ENCODE measurements at regions of chr10 and their contacts with region 1.

Region 1: DNA sequence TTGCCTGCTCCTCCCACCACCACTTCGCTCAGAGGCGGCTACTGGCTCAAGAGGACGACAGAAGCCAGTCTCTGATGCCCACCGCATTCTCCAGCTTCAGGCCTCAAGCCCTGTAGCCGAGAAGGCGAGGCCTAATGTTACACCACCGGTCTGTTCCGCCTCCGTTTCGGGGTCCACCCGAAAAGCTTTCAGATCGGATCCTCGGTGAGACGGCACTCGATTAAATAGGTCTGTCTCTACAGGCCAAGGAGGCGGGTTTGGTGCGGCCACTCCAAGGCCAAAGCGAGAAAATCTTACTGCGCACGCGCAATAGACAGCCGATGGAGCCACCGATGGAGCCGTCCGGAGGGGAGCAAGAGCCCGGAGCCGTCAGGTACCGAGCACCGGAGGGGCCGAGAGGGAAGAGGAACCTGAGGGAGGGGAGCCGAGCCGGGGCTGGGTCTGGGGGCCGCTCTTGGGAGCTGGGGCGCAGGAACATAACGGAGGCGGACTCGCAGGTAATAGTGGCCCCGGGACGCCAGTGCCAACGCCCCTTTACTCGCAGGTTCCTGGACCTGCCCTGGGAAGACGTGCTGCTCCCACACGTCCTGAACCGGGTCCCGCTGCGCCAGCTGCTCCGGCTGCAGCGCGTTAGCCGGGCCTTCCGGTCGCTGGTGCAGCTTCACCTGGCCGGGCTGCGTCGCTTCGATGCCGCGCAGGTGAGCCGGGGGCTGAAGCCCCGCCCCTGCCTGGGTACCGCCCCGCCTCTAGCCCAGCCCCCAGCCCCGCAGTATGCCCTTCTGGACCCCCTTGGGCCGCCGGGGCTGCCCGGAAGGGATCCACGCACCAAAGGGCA is at the start of gene FBXL15:
- DNase-seq: peak; percentile 82 to 96 (median 90)
- ATAC-seq: peak; percentile 86
- H3K4me3 ChIP-seq: peak within 1 kb of the TSS; percentile 93
- H3K4me3 Mint-ChIP-seq: peak within 1 kb of the TSS; percentile 94 to 99 (median 98)
- H3K27ac ChIP-seq: peak within 1 kb of the TSS; percentile 75
- H3K27ac Mint-ChIP-seq: peak within 1 kb of the TSS; percentile 91 to 97 (median 95)
- H3K4me1 ChIP-seq: peaks cover 26 to 33% of the 10 kb centered on the region in 2 donors
- H3K4me1 Mint-ChIP-seq: peaks cover 17 to 46% (median 38%) of the 10 kb centered on the region in 7 donors
- H3K27me3 ChIP-seq: no peaks in the 10 kb centered on the region
- H3K27me3 Mint-ChIP-seq: peaks cover 17 to 26% (median 19%) of the 10 kb centered on the region in 5 donors
- total RNA-seq, gene FBXL15: 10.8 to 21.0 (median 14.1) TPM

Region 2: GRCh38 chr10:102225646-102226541 is 195.1 kb before region 1 on chr10 and contains the start of gene ELOVL3:
- CTCF ChIA-PET with region 1: no interaction called
- POLR2A ChIA-PET with region 1: no interaction called
- intact Hi-C with region 1: loop called in 1 of 2 experiments (anchors 1 kb)
- DNase-seq: peak; percentile 56 to 83 (median 79)
- ATAC-seq: peak; percentile 95
- H3K4me3 ChIP-seq: peak within 1 kb of the TSS; percentile 26
- H3K4me3 Mint-ChIP-seq: peak within 1 kb of the TSS; percentile 72 to 95 (median 80)
- H3K27ac ChIP-seq: no peak within 1 kb of the TSS
- H3K27ac Mint-ChIP-seq: peak within 1 kb of the TSS in 5 of 9 donors; percentile 14 to 78 (median 74)
- H3K4me1 ChIP-seq: peaks cover 20 to 22% of the 10 kb centered on the region in 2 donors
- H3K4me1 Mint-ChIP-seq: peaks cover 14 to 23% (median 21%) of the 10 kb centered on the region in 7 donors
- H3K27me3 ChIP-seq: peaks cover 3 to 5% of the 10 kb centered on the region in 2 donors
- H3K27me3 Mint-ChIP-seq: peaks cover 36 to 74% (median 39%) of the 10 kb centered on the region in 5 donors
- total RNA-seq, gene ELOVL3: not detected

Region 3: DNA sequence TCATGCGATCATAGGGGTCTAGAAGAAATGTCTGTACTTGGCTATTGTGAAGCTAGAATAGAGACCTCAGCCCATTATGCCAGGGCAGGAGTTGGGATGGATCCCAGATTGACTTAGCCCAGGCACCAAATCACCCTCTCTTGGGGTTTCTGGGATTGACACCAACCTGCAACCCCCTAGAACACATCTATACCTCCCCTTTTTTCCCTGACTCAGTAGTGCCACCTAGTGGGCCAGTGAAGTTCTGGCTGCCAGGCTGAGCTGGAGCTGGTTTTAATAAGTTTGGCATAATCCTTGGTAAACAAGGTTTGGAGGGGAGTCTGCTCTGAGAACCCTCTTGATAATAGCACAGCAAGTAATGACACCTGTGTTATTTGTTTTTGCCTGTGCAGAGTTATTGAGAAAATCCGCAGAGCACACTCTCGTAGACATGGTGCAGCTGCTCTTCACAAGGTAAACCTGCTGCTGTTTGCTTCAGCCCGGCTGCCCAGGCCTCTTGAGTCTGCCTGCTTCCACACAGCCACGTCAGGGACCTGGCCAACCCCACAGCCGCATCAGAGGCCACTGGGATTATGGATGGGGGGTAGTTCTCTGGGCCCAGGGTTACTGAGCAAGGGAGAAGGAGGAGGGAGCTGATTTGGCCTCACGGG is 68.8 kb before region 1 on chr10:
- CTCF ChIA-PET with region 1: no interaction called
- POLR2A ChIA-PET with region 1: no interaction called
- intact Hi-C with region 1: no loop called
- DNase-seq: peak; percentile 41 to 75 (median 64)
- ATAC-seq: peak; percentile 85
- H3K4me3 ChIP-seq: no peak overlapping the region
- H3K4me3 Mint-ChIP-seq: no peak overlapping the region
- H3K27ac ChIP-seq: no peak overlapping the region
- H3K27ac Mint-ChIP-seq: no peak overlapping the region
- H3K4me1 ChIP-seq: no peaks in the 10 kb centered on the region
- H3K4me1 Mint-ChIP-seq: peaks cover 0 to 3% (median 0%) of the 10 kb centered on the region in 7 donors
- H3K27me3 ChIP-seq: no peaks in the 10 kb centered on the region
- H3K27me3 Mint-ChIP-seq: no peaks in the 10 kb centered on the region

Region 4: DNA sequence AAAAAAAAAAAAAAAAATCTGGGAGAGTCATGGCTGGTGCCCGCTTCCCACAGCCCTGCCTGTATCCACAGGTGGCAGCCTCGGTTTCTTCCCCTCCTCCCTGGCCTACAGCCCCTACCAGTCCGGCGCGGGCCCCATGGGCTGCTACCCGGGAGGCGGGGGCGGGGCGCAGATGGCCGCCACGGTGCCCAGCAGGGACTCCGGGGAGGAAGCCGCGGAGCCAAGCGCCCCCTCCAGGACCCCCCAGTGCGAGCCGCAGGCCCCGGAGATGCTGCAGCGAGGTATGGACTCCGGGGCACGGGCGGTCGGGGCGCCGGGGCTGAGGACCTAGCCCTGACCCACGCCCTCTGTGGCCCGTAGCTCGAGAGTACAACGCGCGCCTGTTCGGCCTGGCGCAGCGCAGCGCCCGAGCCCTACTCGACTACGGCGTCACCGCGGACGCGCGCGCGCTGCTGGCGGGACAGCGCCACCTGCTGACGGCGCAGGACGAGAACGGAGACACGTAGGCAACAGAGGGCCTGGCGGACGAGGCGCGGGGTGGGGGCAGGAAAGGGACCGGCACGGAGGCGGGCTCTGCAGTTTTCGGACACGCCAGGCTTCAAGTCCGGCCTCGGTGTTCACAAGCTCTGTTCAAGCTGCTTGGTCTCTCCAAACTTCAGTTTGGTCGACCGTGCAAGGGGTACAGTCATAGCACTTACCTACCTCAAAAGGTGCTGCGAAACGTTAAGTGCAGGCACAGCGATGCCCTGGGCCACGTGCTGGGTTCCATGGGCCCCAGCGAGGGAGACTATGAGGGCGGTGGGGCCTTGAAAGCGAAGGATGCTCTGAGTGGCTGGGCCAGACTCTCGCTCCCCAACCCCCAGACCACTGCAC is 21.6 kb before region 1 on chr10:
- CTCF ChIA-PET with region 1: interaction called, 40 read pairs
- POLR2A ChIA-PET with region 1: interaction called, 90 read pairs
- intact Hi-C with region 1: loop called (anchors 1 kb)
- DNase-seq: peak; percentile 80 to 93 (median 88)
- ATAC-seq: peak; percentile 74
- H3K4me3 ChIP-seq: peak overlapping the region; percentile 56
- H3K4me3 Mint-ChIP-seq: peak overlapping the region; percentile 62 to 83 (median 76)
- H3K27ac ChIP-seq: peak overlapping the region; percentile 93
- H3K27ac Mint-ChIP-seq: peak overlapping the region; percentile 46 to 100 (median 88)
- H3K4me1 ChIP-seq: peaks cover 20 to 26% of the 10 kb centered on the region in 2 donors
- H3K4me1 Mint-ChIP-seq: peaks cover 15 to 42% (median 35%) of the 10 kb centered on the region in 7 donors
- H3K27me3 ChIP-seq: no peaks in the 10 kb centered on the region
- H3K27me3 Mint-ChIP-seq: no peaks in the 10 kb centered on the region

Region 5: DNA sequence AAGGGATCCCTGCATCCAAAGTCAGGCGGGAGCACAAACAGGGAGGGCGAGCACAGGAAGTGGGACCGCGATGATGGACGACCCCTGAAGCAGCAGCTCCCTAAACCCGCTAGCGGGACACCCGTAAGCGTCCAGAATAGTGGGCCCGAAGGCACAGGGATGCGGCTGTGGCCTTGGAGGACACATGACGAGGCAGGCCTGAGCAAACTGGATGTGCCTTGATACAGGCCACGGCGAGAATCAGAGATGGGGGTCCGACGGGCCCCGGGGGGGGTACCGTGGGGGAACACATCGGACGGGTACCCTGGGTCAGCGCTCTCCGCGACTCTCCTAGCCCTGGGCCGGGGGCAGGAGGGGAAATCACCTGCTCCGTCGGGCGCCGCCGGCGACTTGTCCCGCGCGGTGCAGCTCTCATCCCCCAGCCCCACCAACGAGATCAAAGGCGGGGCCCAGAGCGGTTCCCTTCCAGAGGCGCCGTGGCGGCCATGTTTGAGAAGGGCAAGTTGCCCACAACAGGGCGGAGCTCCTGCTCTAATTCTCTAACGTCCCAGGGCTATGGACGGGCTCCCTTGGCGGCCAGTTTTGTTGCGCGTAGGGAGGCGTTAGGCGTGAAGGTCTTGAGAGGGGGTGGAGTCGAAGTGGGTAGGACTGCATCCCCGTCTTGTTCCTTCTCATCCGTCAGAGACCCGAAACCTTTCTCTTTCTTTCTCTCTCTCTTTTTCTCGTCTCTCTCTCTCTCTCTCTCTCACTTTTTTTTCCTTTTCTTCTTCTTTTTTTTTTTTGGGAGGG is 11.3 kb after region 1 on chr10 and contains the start of gene CUEDC2:
- CTCF ChIA-PET with region 1: interaction called, 20 read pairs
- POLR2A ChIA-PET with region 1: interaction called, 133 read pairs
- intact Hi-C with region 1: loop called (anchors 1 kb)
- DNase-seq: peak; percentile 86 to 97 (median 91)
- ATAC-seq: peak; percentile 98
- H3K4me3 ChIP-seq: peak within 1 kb of the TSS; percentile 96
- H3K4me3 Mint-ChIP-seq: peak within 1 kb of the TSS; percentile 81 to 96 (median 93)
- H3K27ac ChIP-seq: peak within 1 kb of the TSS; percentile 80
- H3K27ac Mint-ChIP-seq: peak within 1 kb of the TSS; percentile 90 to 97 (median 94)
- H3K4me1 ChIP-seq: peaks cover 28 to 49% of the 10 kb centered on the region in 2 donors
- H3K4me1 Mint-ChIP-seq: peaks cover 38 to 60% (median 48%) of the 10 kb centered on the region in 7 donors
- H3K27me3 ChIP-seq: no peaks in the 10 kb centered on the region
- H3K27me3 Mint-ChIP-seq: no peaks in the 10 kb centered on the region
- total RNA-seq, gene CUEDC2: 27.0 to 69.0 (median 31.9) TPM

Region 6: GRCh38 chr10:102461187-102462054 is 40.4 kb after region 1 on chr10:
- CTCF ChIA-PET with region 1: interaction called, 11 read pairs
- POLR2A ChIA-PET with region 1: interaction called, 7 read pairs
- intact Hi-C with region 1: loop called (anchors 1 kb)
- DNase-seq: peak; percentile 84 to 95 (median 90)
- ATAC-seq: peak; percentile 99
- H3K4me3 ChIP-seq: peak overlapping the region; percentile 93
- H3K4me3 Mint-ChIP-seq: peak overlapping the region; percentile 83 to 96 (median 92)
- H3K27ac ChIP-seq: peak overlapping the region; percentile 74
- H3K27ac Mint-ChIP-seq: peak overlapping the region; percentile 72 to 90 (median 85)
- H3K4me1 ChIP-seq: peaks cover 9 to 14% of the 10 kb centered on the region in 2 donors
- H3K4me1 Mint-ChIP-seq: peaks cover 19 to 40% (median 34%) of the 10 kb centered on the region in 7 donors
- H3K27me3 ChIP-seq: no peaks in the 10 kb centered on the region
- H3K27me3 Mint-ChIP-seq: peaks cover 0 to 2% (median 0%) of the 10 kb centered on the region in 5 donors

Region 7: DNA sequence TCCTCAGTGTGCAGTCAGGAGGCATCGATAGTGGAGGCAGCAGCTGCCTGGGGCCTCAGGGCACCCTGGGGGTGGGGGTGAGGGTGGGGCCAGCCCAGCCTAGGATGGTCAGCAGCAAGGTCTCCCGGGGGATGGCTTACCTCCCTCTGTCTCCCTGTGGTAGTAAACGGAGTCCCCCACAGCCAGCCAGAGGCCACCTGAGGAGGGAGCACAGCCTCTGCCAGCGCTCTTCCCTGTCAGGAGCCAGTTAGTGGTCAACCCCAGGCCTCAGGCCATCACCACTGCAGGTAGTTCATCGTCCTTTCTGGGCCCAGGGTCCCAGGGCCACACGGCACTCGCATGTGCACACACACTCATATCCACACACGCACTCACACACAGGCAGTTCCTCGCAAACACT is 59.4 kb after region 1 on chr10:
- CTCF ChIA-PET with region 1: interaction called, 4 read pairs
- POLR2A ChIA-PET with region 1: interaction called, 3 read pairs
- intact Hi-C with region 1: loop called (anchors 1 kb)
- DNase-seq: no peak
- ATAC-seq: no peak
- H3K4me3 ChIP-seq: no peak overlapping the region
- H3K4me3 Mint-ChIP-seq: no peak overlapping the region
- H3K27ac ChIP-seq: no peak overlapping the region
- H3K27ac Mint-ChIP-seq: no peak overlapping the region
- H3K4me1 ChIP-seq: peaks cover 0 to 4% of the 10 kb centered on the region in 2 donors
- H3K4me1 Mint-ChIP-seq: peaks cover 5 to 26% (median 15%) of the 10 kb centered on the region in 7 donors
- H3K27me3 ChIP-seq: no peaks in the 10 kb centered on the region
- H3K27me3 Mint-ChIP-seq: no peaks in the 10 kb centered on the region

Region 8: GRCh38 chr10:103238506-103239252 is 817.7 kb after region 1 on chr10:
- CTCF ChIA-PET with region 1: no interaction called
- POLR2A ChIA-PET with region 1: no interaction called
- intact Hi-C with region 1: no loop called
- DNase-seq: no peak
- ATAC-seq: no peak
- H3K4me3 ChIP-seq: no peak overlapping the region
- H3K4me3 Mint-ChIP-seq: no peak overlapping the region
- H3K27ac ChIP-seq: no peak overlapping the region
- H3K27ac Mint-ChIP-seq: no peak overlapping the region
- H3K4me1 ChIP-seq: no peaks in the 10 kb centered on the region
- H3K4me1 Mint-ChIP-seq: peaks cover 5 to 22% (median 6%) of the 10 kb centered on the region in 7 donors
- H3K27me3 ChIP-seq: no peaks in the 10 kb centered on the region
- H3K27me3 Mint-ChIP-seq: peaks cover 0 to 4% (median 0%) of the 10 kb centered on the region in 5 donors